Activated CD4-positive, alpha-beta T cell treated with anti-CD3 and anti-CD28 coated beads for 36 hours (primary cell): ENCODE measurements at regions of chr9 and their contacts with region 1.

Region 1: GRCh38 chr9:108272349-108272899 is 583.4 kb downstream of the ACTL7B start:
- DNase-seq: no peak
- ATAC-seq: no peak
- H3K4me3 Mint-ChIP-seq: no peak overlapping the region
- H3K27ac Mint-ChIP-seq: no peak overlapping the region
- H3K4me1 Mint-ChIP-seq: no peaks in the 10 kb centered on the region
- H3K27me3 Mint-ChIP-seq: no peaks in the 10 kb centered on the region

Region 2: GRCh38 chr9:107465467-107466451 is 806.7 kb before region 1 on chr9:
- CTCF ChIA-PET with region 1: no interaction called
- POLR2A ChIA-PET with region 1: no interaction called
- intact Hi-C with region 1: loop called in 1 of 2 experiments (anchors 10 kb)
- DNase-seq: peak; percentile 69
- ATAC-seq: peak; percentile 86
- H3K4me3 Mint-ChIP-seq: no peak overlapping the region
- H3K27ac Mint-ChIP-seq: no peak overlapping the region
- H3K4me1 Mint-ChIP-seq: peaks cover 3% of the 10 kb centered on the region
- H3K27me3 Mint-ChIP-seq: peaks cover 34% of the 10 kb centered on the region